ENCODE measurements at regions of chr22 and their contacts with region 1.

Region 1: GRCh38 chr22:28909375-28909774 is 26.0 kb downstream of the ZNRF3 start:
- DNase-seq: no peak
- H3K4me3 ChIP-seq: no peak overlapping the region
- H3K27me3 ChIP-seq: no peaks in the 10 kb centered on the region
- CTCF ChIP-seq: no peak

Region 2: DNA sequence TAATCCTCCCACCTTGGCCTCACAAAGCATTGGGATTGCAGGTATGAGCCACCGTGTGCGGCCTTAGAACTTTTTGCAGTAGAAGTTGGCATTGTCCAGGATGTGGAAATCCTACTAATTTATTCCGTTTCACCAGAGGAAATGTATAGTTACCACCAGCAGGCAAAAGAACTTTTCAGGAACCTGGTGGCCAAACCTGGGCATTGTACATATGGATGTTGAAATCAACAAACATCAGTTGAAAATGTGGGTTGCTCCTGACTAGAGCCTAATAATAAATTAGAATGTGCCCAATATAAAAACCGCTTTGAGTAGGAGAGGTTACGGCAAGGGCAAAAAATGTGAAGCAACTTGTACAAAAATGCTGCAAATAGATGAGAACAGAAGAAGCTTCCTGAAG is 68.3 kb before region 1 on chr22:
- CTCF ChIA-PET with region 1: no interaction called
- POLR2A ChIA-PET with region 1: no interaction called
- DNase-seq: no peak
- H3K4me3 ChIP-seq: no peak overlapping the region
- H3K27me3 ChIP-seq: no peaks in the 10 kb centered on the region
- CTCF ChIP-seq: no peak

Region 3: GRCh38 chr22:28855355-28856094 is 53.9 kb before region 1 on chr22:
- CTCF ChIA-PET with region 1: no interaction called
- POLR2A ChIA-PET with region 1: no interaction called
- DNase-seq: peak; percentile 22
- H3K4me3 ChIP-seq: no peak overlapping the region
- H3K27me3 ChIP-seq: peaks cover 2% of the 10 kb centered on the region; the same call in 1 of the 2 replicates
- CTCF ChIP-seq: peak; percentile 84

Region 4: GRCh38 chr22:28882878-28883656 is 26.3 kb before region 1 on chr22 and contains the start of gene ZNRF3:
- CTCF ChIA-PET with region 1: interaction called, 3 read pairs
- POLR2A ChIA-PET with region 1: interaction called, 13 read pairs
- DNase-seq: peak; percentile 15
- H3K4me3 ChIP-seq: peak within 1 kb of the TSS; percentile 60
- H3K27me3 ChIP-seq: no peaks in the 10 kb centered on the region
- CTCF ChIP-seq: peak; percentile 7; the same call in 1 of the 2 replicates
- polyA plus RNA-seq, gene ZNRF3: 0.75 and 1.1 TPM in 2 replicates

Region 5: DNA sequence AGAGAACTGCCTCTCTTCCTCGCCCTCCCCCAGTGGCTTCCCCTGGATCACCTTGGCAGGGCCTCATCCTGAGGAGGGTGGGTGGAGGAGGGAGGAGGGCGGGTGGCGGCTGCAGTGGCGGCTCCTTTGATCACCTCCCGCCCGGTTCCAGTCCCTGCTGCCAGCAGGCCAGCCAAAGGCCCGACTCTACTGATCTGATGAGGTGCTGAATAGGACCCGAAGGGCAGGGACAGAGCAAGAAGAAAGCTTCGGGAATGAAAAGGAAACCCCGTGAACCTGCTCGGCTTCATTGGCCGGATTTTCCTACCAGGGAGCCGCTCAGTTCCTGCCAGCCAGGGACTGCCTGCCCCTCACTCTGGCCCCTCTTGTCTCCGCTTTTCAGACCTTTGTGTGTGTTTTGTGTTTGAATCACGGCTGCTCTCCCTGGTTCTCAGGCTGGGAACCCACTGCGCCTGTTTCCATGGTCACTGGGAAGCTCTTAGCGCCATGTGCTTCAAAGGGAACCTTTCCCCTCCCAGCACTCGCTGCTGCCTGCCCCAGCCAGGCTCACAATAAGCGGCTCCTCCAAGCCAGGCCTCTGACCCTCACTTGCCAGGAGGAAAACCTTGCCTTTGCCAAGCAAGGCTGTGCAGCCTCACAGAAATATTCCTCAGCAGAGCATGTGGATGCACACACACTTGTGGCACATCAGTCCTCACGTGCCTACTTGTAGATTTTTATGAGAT is 95.4 kb after region 1 on chr22:
- CTCF ChIA-PET with region 1: no interaction called
- POLR2A ChIA-PET with region 1: no interaction called
- DNase-seq: no peak
- H3K4me3 ChIP-seq: no peak overlapping the region
- H3K27me3 ChIP-seq: no peaks in the 10 kb centered on the region
- CTCF ChIP-seq: no peak